ENCODE measurements at regions of chr3 and their contacts with region 1.

Region 1: GRCh38 chr3:185764163-185764979 is 60.5 kb downstream of the IGF2BP2 start:
- DNase-seq: no peak
- H3K4me3 ChIP-seq: no peak overlapping the region
- H3K27ac ChIP-seq: no peak overlapping the region
- H3K4me1 ChIP-seq: peaks cover 0 to 2% of the 10 kb centered on the region in 2 donors
- H3K27me3 ChIP-seq: no peaks in the 10 kb centered on the region
- CTCF ChIP-seq: no peak

Region 2: DNA sequence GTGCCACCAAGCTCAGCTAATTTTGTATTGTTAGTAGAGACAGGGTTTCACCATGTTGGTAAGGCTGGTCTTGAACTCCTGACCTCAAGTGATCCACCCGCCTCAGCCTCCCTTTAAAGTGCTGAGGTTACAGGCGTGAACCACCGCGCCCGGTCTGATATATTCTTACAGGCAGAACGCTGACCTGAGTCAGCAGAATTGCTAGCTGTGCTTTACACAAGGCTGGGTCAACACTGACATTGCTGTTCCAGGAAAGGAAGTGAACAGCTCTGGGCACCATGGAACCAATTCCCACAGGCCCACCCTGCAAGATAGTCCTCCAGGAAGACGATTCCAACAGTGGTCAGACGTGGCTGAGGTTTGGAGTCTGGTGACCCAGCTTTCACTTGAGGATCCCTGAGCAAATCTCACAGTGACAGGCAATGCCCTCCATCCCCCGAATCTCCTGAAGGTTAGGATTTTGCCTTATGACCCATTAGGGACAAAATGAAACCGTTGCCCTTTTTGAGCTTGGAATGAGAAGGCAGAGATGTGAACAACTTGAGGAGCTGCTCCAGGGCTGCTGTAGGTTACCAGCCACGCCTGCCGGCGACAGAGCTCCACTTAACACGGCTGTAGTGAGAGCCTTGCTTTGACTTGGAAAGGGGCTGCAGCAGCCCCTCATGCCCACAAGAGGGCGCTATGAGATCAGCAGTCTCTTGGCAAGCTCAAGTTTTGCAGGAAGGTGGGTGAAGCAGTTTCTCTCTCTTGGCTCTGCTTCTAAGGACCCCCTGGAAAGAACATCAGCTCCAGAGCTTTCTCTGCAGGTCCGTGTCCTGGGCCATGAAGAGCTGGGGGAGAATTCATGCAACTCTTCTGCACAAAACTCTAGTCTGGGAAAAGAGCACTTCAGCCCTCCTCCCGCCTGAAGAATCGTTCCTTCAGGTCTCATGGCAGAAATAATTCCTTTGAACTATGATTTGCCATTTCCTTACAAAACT is 104.1 kb before region 1 on chr3:
- intact Hi-C with region 1: loop called (anchors 2 kb)
- DNase-seq: peak in 1 of 2 donors; percentile 85
- H3K4me3 ChIP-seq: peak overlapping the region in 1 of 2 donors; percentile 24
- H3K27ac ChIP-seq: peak overlapping the region in 1 of 2 donors; percentile 14
- H3K4me1 ChIP-seq: peaks cover 4 to 47% of the 10 kb centered on the region in 2 donors
- H3K27me3 ChIP-seq: no peaks in the 10 kb centered on the region
- CTCF ChIP-seq: peak; percentile 82 to 97 (median 96)

Region 3: GRCh38 chr3:185677146-185677829 is 87.1 kb before region 1 on chr3:
- intact Hi-C with region 1: loop called (anchors 2 kb)
- DNase-seq: no peak
- H3K4me3 ChIP-seq: no peak overlapping the region
- H3K27ac ChIP-seq: no peak overlapping the region
- H3K4me1 ChIP-seq: no peaks in the 10 kb centered on the region
- H3K27me3 ChIP-seq: no peaks in the 10 kb centered on the region
- CTCF ChIP-seq: peak in 2 of 3 experiments; percentile 9 to 17

Measured in ascending aorta (tissue), 2 donors.